BJ (cell line): ENCODE measurements at regions of chr12 and their contacts with region 1.

Region 1: DNA sequence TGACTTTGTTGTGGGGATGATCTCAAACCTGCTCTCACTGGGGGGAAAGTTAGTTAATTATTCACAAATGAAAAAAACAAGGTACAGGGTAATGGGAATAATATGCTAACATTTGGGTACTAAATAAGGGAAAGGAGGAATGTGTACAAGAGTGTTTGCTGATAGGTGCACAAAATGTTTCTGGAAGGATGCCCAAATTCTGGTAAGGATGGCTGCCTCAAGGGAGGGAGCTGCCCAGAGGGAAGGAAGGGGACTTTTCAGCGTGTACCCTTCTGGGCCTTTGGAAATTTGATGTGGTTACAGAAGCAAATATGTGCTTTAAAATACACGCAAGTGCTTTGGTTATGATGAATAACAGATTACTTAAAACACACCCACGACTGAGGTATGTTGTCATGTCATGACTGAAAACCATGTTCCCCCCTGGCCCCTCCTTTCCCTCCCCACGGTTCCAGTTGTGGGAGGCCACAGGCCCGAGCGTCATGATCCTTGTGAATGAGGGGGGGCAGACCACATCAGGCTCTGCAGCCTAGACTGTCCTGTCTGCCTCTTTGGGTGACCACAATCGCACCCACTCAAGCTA is 43.3 kb upstream of the PLEKHG6 start:
- DNase-seq: peak; percentile 55
- H3K4me3 ChIP-seq: no peak overlapping the region
- H3K27me3 ChIP-seq: peaks cover 4% of the 10 kb centered on the region; the same call in 1 of the 2 replicates
- CTCF ChIP-seq: no peak

Region 2: GRCh38 chr12:6182116-6182898 is 84.9 kb before region 1 on chr12:
- CTCF ChIA-PET with region 1: no interaction called
- POLR2A ChIA-PET with region 1: no interaction called
- DNase-seq: peak; percentile 92
- H3K4me3 ChIP-seq: no peak overlapping the region
- H3K27me3 ChIP-seq: no peaks in the 10 kb centered on the region
- CTCF ChIP-seq: no peak

Region 3: GRCh38 chr12:6253278-6253677 is 14.0 kb before region 1 on chr12:
- CTCF ChIA-PET with region 1: interaction called, 11 read pairs
- POLR2A ChIA-PET with region 1: no interaction called
- DNase-seq: no peak
- H3K4me3 ChIP-seq: no peak overlapping the region
- H3K27me3 ChIP-seq: peaks cover 8% of the 10 kb centered on the region
- CTCF ChIP-seq: no peak